ENCODE measurements at regions of chr2 and their contacts with region 1.

Region 1: DNA sequence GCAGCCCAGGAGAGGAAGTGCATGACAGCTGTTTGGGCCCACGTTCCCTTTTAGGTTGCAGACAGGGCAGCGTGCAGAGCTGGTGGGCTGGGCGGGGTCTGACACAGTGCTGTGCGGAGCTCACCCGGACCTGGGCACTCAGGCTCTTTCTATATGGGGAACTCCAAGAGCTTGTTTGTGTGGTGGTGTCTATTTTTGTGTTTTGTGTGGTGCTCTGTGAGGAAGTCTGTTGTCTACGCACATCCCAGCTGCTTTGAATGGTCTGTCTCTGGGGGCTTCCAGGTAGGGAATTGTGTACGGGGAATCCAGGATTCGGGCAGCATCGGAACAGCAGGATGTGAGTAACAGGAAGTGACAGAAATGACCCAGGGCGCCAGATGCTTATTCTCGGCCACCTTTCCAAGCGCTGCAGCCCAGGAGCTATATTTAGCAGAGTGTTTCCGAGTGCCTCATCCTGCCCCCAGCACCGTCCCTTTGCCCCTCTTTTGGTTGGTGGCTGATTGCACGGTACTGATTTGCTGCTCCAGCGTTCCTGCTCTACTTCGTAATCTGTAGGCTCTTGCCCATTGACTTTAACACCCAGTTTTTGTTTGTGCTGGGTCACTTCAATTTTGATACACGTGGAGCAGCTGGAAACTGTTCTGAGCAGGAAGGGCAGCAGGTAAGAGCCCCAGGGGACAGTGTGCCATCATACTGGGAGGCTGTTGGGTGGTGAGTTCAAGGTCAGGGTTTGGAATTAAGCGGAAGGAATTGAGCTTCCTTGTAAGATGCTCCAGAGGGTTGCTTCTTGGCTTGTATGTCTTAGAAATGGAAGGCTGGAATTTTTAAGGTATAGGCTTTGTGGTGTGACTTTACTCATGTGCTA is 64.7 kb downstream of the DGKD start:
- DNase-seq: peak; percentile 56
- ATAC-seq: peak; percentile 69
- H3K4me3 Mint-ChIP-seq: peak overlapping the region; percentile 87
- H3K27ac Mint-ChIP-seq: peak overlapping the region; percentile 97
- H3K4me1 Mint-ChIP-seq: peaks cover 99% of the 10 kb centered on the region
- H3K27me3 Mint-ChIP-seq: no peaks in the 10 kb centered on the region
- CTCF ChIP-seq: no peak

Region 2: DNA sequence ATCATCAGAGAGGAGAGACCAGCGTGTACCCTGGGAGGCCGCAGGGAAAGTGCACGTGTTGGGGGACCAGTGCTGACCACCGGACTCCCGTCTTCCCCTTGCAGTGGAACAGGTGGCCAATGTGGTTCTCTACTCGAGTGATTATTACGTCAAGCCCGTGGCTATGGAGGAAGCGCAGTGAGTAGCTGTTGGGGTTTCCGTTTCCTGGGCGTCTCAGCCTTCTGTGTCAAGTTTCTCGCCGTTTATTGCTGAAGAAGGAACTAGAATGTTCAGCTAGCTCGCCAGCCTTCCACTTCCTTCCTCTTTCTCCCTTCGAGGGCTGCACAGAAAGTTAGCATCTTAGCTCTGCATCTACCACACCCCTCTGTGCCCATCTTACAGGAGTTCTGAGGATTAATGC is 87.5 kb before region 1 on chr2:
- CTCF ChIA-PET with region 1: no interaction called
- POLR2A ChIA-PET with region 1: interaction called, 4 read pairs
- intact Hi-C with region 1: loop called (anchors 1 kb)
- DNase-seq: peak; percentile 68
- ATAC-seq: peak; percentile 91
- H3K4me3 Mint-ChIP-seq: peak overlapping the region; percentile 42
- H3K27ac Mint-ChIP-seq: peak overlapping the region; percentile 97
- H3K4me1 Mint-ChIP-seq: peaks cover 82% of the 10 kb centered on the region
- H3K27me3 Mint-ChIP-seq: no peaks in the 10 kb centered on the region
- CTCF ChIP-seq: no peak

Region 3: GRCh38 chr2:233380132-233380895 is 38.7 kb before region 1 on chr2:
- CTCF ChIA-PET with region 1: no interaction called
- POLR2A ChIA-PET with region 1: interaction called, 12 read pairs
- intact Hi-C with region 1: loop called (anchors 2 kb)
- DNase-seq: peak; percentile 50
- ATAC-seq: peak; percentile 83
- H3K4me3 Mint-ChIP-seq: peak overlapping the region; percentile 67
- H3K27ac Mint-ChIP-seq: peak overlapping the region; percentile 91
- H3K4me1 Mint-ChIP-seq: peaks cover 83% of the 10 kb centered on the region
- H3K27me3 Mint-ChIP-seq: no peaks in the 10 kb centered on the region
- CTCF ChIP-seq: no peak

Region 4: DNA sequence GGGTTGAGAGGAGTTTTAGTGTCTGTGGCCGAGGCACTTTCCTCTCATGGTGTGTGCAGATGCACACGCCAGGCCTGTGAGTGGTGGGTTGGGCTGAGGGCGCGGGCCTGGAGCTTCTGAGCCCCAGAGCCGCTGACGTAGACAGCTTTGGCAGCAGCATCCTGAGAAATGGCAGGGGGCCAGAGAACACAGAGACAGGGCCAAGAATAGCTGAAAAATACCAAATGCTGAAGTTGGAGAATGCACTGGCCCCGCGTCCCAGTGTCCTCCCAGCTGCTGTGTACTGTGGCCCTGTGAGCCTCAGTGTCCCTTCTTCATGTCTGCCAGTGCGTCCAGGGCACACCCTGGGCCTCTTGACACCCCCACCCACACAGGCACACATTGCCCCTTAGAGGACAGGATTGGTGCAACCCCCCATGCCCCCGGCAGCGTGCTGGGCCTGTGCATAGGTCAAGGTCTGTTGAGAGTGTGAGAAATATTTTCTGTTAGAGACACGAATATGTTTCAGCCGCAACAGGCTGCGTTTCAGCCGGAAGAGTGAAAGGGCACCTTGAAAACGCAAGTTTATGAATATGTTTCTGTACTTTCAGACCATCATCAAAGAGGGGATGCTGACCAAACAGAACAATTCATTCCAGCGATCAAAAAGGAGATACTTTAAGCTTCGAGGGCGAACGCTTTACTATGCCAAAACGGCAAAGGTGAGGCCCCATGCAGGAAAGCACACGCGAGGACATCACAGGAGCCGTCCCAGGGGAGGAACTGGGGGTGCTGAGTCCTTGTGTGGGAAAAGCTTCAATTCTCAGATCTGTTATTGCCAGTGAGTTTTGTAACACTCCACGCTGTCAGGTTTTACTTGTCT is 31.1 kb before region 1 on chr2:
- CTCF ChIA-PET with region 1: no interaction called
- POLR2A ChIA-PET with region 1: interaction called, 12 read pairs
- intact Hi-C with region 1: no loop called
- DNase-seq: no peak
- ATAC-seq: no peak
- H3K4me3 Mint-ChIP-seq: no peak overlapping the region
- H3K27ac Mint-ChIP-seq: peak overlapping the region; percentile 95
- H3K4me1 Mint-ChIP-seq: peaks cover 63% of the 10 kb centered on the region
- H3K27me3 Mint-ChIP-seq: no peaks in the 10 kb centered on the region
- CTCF ChIP-seq: no peak

Region 5: GRCh38 chr2:233404222-233404621 is 14.8 kb before region 1 on chr2:
- CTCF ChIA-PET with region 1: interaction called, 28 read pairs
- POLR2A ChIA-PET with region 1: interaction called, 19 read pairs
- intact Hi-C with region 1: loop called (anchors 1 kb)
- DNase-seq: no peak
- ATAC-seq: peak; percentile 92
- H3K4me3 Mint-ChIP-seq: no peak overlapping the region
- H3K27ac Mint-ChIP-seq: peak overlapping the region; percentile 82
- H3K4me1 Mint-ChIP-seq: peaks cover 57% of the 10 kb centered on the region
- H3K27me3 Mint-ChIP-seq: no peaks in the 10 kb centered on the region
- CTCF ChIP-seq: no peak

Region 6: DNA sequence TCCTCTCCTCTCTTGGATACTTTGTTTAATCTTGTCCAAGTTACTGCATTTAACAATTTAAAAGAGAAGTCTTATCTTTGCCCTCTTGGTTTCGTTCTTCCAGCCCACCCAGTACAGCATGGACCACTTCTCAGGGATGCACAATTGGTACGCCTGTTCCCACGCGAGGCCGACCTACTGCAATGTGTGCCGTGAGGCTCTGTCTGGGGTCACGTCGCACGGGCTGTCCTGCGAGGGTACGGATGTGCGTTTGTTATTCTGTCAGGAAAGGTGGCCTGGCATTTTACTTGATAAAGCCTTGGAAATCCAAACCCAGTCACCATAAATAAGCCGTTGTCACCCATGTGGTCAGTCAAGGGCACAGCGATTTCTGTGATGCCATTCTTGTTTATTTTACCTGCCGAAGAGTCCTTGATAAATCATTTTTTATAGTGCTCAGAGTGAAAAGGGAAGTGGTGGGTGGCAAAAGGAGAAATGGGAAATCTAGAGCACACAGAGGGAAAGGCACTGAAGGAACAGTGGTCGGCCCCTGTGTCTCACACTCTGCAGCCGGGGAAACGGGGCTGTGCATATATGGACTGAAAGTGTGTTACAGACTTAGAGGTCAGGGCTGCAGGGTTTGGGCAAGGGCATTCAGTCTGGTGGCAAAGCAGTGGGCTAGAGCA is 15.8 kb after region 1 on chr2:
- CTCF ChIA-PET with region 1: interaction called, 4 read pairs
- POLR2A ChIA-PET with region 1: interaction called, 5 read pairs
- intact Hi-C with region 1: loop called (anchors 2 kb)
- DNase-seq: peak; percentile 10
- ATAC-seq: no peak
- H3K4me3 Mint-ChIP-seq: peak overlapping the region; percentile 8
- H3K27ac Mint-ChIP-seq: peak overlapping the region; percentile 54
- H3K4me1 Mint-ChIP-seq: peaks cover 36% of the 10 kb centered on the region
- H3K27me3 Mint-ChIP-seq: no peaks in the 10 kb centered on the region
- CTCF ChIP-seq: no peak

Region 7: DNA sequence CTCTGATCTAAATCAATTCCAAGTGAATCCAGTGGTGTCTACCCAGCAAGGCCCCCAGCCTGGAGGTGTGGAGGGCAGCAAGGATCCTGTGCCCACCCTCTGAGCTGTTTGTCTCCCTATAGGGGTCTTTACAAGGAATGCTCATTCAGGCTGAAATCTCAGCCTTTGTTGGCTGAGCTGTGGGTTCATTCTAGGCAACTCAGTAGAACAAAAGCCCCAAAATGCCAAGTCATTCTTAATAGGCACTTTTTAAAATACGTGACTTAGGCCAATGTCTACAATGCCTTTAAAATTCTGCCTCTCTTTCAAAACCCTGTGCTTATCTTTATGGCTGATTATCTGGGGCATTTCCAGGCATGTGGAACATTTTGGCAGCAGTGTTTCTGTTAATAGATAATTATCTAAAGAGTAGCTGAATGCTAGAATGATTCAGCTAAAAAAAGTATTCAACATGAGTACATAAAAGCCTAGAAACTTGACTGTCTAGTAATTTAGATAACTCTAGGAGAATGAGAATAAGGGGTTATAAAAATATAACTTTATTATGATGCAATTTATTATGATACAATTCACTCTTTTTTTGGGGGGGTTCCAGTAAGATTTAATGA is 281.1 kb after region 1 on chr2:
- CTCF ChIA-PET with region 1: no interaction called
- POLR2A ChIA-PET with region 1: no interaction called
- intact Hi-C with region 1: no loop called
- DNase-seq: no peak
- ATAC-seq: no peak
- H3K4me3 Mint-ChIP-seq: no peak overlapping the region
- H3K27ac Mint-ChIP-seq: no peak overlapping the region
- H3K4me1 Mint-ChIP-seq: no peaks in the 10 kb centered on the region
- H3K27me3 Mint-ChIP-seq: peaks cover 5% of the 10 kb centered on the region
- CTCF ChIP-seq: no peak